ENCODE measurements at regions of chr3 and their contacts with region 1.

Region 1: GRCh38 chr3:155254445-155254844 is 39.0 kb downstream of the STRIT1 start:
- DNase-seq: no peak
- H3K4me3 ChIP-seq: no peak overlapping the region
- CTCF ChIP-seq: no peak
- POLR2A ChIP-seq: no peak

Region 2: GRCh38 chr3:153621953-153622352 is 1632.5 kb before region 1 on chr3:
- intact Hi-C with region 1: no loop called
- DNase-seq: no peak
- H3K4me3 ChIP-seq: no peak overlapping the region
- CTCF ChIP-seq: no peak
- POLR2A ChIP-seq: no peak

Region 3: GRCh38 chr3:154971771-154972326 is 282.6 kb before region 1 on chr3:
- intact Hi-C with region 1: no loop called
- DNase-seq: no peak
- H3K4me3 ChIP-seq: no peak overlapping the region
- CTCF ChIP-seq: no peak
- POLR2A ChIP-seq: no peak

Region 4: DNA sequence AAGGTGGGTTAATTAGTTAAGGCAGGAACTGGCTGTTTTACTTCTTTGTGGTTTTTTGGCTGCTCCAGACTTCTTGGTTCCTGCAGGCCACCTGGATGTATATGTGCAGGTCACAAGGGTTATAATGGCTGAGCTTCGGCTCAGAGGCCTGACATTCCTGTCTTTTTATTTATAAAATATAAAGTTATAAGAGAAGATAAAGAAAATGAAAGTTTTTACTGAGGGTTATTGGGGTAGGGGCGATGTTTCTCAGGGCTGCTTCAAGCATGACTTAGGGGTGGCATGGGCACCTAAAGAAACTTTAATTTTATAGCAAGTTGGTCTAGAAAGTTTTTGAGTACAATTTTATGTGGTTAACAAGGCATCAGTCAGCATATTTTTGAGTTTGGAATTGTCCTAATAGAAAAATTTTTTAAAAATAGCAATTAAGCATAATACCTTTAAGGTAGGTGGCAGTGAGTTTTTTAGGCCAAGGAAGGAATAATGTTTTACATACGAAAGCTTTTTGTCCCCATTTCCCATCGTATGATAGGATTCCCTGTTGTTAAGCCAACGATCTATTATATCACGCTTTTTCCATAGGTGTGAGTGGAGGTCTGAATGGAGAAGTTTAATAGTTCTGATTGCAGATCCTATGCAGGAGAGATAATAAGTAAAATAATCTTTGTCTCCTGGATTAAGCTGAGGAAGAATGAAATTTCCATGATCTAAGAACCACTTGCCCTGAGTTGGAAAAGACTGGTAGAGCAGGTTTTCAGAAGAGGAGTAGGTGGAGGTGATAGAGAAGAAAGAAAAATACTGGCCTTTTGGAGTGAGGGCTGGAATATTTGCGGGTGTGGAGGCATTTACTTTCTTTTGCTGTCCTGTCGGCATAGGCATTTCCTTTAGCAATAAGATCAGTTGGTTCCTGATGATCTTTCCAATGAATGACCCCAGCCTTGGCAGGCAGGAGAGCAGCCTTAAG is 28.9 kb after region 1 on chr3:
- intact Hi-C with region 1: loop called (anchors 1 kb)
- DNase-seq: no peak
- H3K4me3 ChIP-seq: no peak overlapping the region
- CTCF ChIP-seq: no peak
- POLR2A ChIP-seq: no peak

Measured in lower leg skin (tissue), 4 donors.